HepG2 (cell line): ENCODE measurements at regions of chr17 and their contacts with region 1.

Region 1: GRCh38 chr17:73814075-73814474 is 169.8 kb upstream of the SDK2 start:
- DNase-seq: no peak
- ATAC-seq: no peak
- H3K4me3 ChIP-seq: no peak overlapping the region
- H3K27ac ChIP-seq: no peak overlapping the region
- H3K4me1 ChIP-seq: no peaks in the 10 kb centered on the region
- H3K27me3 ChIP-seq: peaks cover 0 to 6% of the 10 kb centered on the region in 2 experiments; a peak in 1 of 5 replicates
- CTCF ChIP-seq: no peak
- EP300 ChIP-seq: no peak
- POLR2A ChIP-seq: no peak
- RAD21 ChIP-seq: no peak

Region 2: DNA sequence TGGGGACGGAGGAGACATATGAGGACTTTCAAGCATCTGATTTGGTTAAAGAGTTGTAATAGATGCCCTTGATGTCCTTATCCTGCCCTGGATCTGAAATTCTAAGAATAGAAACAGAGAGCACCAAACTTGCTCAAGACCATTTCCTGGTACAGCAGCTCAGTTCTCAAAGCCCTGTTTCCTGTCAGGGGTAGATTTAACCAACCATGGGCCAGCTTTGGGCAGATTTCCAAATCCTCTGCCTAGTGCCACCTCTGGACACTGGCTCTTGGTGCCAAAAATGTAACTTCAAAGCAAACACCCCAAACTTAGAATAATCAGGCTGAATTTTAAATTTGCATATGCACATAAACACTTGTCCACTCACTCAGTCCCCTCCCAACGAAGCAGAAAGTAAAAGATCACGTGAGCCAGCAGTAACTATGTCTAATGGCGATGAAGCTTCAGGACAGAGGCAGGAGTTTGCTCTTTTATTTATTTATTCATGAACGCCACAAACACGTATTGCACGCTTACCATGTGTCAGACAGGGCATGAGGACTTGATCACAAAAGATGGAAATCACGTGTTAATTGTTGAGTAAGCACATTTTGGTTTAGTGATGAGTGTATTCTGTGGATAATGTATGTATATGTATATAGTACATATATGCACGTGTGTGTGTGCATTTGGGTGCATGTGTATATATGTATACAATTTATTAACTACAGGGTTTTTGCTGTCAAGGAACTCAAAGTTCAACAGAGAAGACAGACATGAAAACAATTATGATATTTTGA is 146.7 kb before region 1 on chr17:
- CTCF ChIA-PET with region 1: no interaction called
- POLR2A ChIA-PET with region 1: no interaction called
- in situ Hi-C with region 1: no loop called
- intact Hi-C with region 1: no loop called
- DNase-seq: no peak
- ATAC-seq: no peak
- H3K4me3 ChIP-seq: no peak overlapping the region
- H3K27ac ChIP-seq: no peak overlapping the region
- H3K4me1 ChIP-seq: no peaks in the 10 kb centered on the region
- H3K27me3 ChIP-seq: 0 out of 5 replicates have a peak, but pooled peaks cover 0 to 3% of the 10 kb centered on the region in 2 experiments
- CTCF ChIP-seq: no peak
- EP300 ChIP-seq: no peak
- POLR2A ChIP-seq: no peak
- RAD21 ChIP-seq: no peak

Region 3: DNA sequence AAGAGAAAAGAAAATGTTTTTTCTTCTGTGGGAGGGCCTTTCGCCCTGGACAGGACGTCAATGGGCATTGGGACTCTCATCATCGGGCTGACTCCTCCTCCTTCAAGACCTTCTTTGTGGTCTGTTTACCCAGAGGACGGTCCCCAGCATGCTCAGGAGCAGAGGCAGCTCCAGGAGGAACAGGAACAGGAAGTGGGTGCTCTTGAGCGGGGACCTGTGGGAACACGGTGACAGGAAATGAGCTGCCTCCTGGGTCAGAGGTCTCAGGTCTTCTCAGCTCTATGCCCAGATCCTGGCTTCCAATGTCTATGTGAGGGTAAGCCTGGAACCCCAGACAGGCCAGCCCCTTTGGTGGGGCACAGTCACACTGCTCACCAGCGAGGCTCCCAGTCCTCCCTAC is 765.8 kb after region 1 on chr17:
- CTCF ChIA-PET with region 1: no interaction called
- POLR2A ChIA-PET with region 1: no interaction called
- in situ Hi-C with region 1: no loop called
- intact Hi-C with region 1: loop called (anchors 5 kb)
- DNase-seq: no peak
- ATAC-seq: no peak
- H3K4me3 ChIP-seq: no peak overlapping the region
- H3K27ac ChIP-seq: no peak overlapping the region
- H3K4me1 ChIP-seq: no peaks in the 10 kb centered on the region
- H3K27me3 ChIP-seq: peaks cover 0 to 32% of the 10 kb centered on the region in 2 experiments; a peak in 3 of 5 replicates
- CTCF ChIP-seq: no peak
- EP300 ChIP-seq: no peak
- POLR2A ChIP-seq: no peak
- RAD21 ChIP-seq: no peak